Aorta (tissue), 5 donors: ENCODE measurements at regions of chr5 and their contacts with region 1.

Region 1: GRCh38 chr5:111158105-111158744 is 66.0 kb upstream of the CAMK4 start:
- DNase-seq: peak in 1 of 2 donors; percentile 63
- ATAC-seq: peak; percentile 81
- H3K4me3 ChIP-seq: no peak overlapping the region
- H3K27ac ChIP-seq: no peak overlapping the region
- H3K4me1 ChIP-seq: no peaks in the 10 kb centered on the region
- H3K27me3 ChIP-seq: no peaks in the 10 kb centered on the region

Region 2: DNA sequence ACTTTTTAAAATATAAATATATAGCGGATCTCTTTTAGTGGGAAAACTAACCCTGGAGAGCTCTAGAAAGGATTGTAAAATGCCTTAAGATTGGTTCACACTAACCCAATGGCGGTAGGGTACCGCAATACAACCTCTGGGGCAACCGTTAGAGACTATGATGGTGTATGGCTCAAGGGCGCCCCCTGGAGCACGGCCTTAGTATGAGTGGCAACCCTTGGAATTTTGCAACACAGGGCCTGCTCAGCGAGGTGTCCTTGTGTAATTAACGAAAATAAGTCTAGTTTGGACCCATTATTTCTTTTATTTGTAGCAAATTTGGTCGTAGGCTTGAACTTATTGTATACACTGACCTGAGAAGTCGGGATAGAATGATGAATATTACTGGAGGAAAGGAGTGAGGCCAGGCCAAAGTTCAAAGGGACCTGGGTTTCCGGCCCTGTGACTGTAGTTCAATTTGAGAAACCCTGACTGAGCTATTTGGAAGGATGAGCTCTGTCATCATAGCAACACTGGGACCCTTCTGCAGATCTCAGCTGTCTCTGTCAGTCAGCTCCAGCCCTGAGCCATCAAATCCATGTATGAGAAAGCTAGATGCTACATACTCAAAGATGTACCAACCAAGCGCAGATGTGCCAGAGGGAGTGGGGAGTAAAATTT is 120.8 kb after region 1 on chr5:
- intact Hi-C with region 1: loop called (anchors 5 to 10 kb)
- DNase-seq: peak; percentile 48 to 77
- ATAC-seq: no peak
- H3K4me3 ChIP-seq: no peak overlapping the region
- H3K27ac ChIP-seq: no peak overlapping the region
- H3K4me1 ChIP-seq: no peaks in the 10 kb centered on the region
- H3K27me3 ChIP-seq: no peaks in the 10 kb centered on the region

Region 3: GRCh38 chr5:112154940-112155686 is 996.9 kb after region 1 on chr5:
- intact Hi-C with region 1: loop called in 1 of 2 experiments (anchors 10 kb)
- DNase-seq: no peak
- ATAC-seq: no peak
- H3K4me3 ChIP-seq: no peak overlapping the region
- H3K27ac ChIP-seq: no peak overlapping the region
- H3K4me1 ChIP-seq: no peaks in the 10 kb centered on the region
- H3K27me3 ChIP-seq: no peaks in the 10 kb centered on the region